CD4-positive, alpha-beta T cell (primary cell): ENCODE measurements at regions of chr21 and their contacts with region 1.

Region 1: GRCh38 chr21:34888569-34889319 is 160.4 kb downstream of the RUNX1 start:
- DNase-seq: peak; percentile 39 to 87 (median 60)
- ATAC-seq: peak; percentile 30
- H3K4me3 ChIP-seq: peak overlapping the region; percentile 80
- H3K4me3 Mint-ChIP-seq: peak overlapping the region; percentile 93
- H3K27ac ChIP-seq: peak overlapping the region; percentile 56 to 79
- H3K27ac Mint-ChIP-seq: peak overlapping the region; percentile 96
- H3K4me1 ChIP-seq: peaks cover 43% of the 10 kb centered on the region
- H3K4me1 Mint-ChIP-seq: peaks cover 66% of the 10 kb centered on the region
- H3K27me3 ChIP-seq: no peaks in the 10 kb centered on the region
- H3K27me3 Mint-ChIP-seq: no peaks in the 10 kb centered on the region
- CTCF ChIP-seq: peak; percentile 3

Region 2: DNA sequence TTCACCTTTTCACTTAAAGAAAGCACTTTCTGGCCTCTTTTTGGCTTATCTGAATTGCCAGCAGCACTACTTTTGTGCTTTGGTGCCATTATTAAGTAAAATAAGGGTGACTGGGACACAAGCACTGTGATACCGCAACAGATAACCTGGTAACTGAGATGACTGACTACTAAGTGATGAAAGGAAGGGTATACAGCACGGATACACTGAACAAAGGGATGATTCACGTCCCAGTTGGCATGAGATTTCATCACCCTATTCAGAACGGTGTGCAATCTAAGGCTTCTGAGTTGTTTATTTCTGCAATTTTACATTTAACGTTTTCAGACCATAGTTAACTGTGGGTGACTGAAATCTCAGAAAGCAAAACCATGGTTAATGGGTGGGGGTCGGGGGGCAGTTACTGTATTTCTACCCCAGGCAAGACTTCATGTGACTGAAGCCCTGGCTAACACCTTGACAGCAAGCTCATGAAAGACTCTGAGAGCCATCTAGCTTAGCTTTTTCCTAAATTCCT is 117.2 kb before region 1 on chr21:
- CTCF ChIA-PET with region 1: no interaction called
- POLR2A ChIA-PET with region 1: no interaction called
- intact Hi-C with region 1: no loop called
- DNase-seq: no peak
- ATAC-seq: no peak
- H3K4me3 ChIP-seq: no peak overlapping the region
- H3K4me3 Mint-ChIP-seq: no peak overlapping the region
- H3K27ac ChIP-seq: no peak overlapping the region
- H3K27ac Mint-ChIP-seq: no peak overlapping the region
- H3K4me1 ChIP-seq: no peaks in the 10 kb centered on the region
- H3K4me1 Mint-ChIP-seq: no peaks in the 10 kb centered on the region
- H3K27me3 ChIP-seq: no peaks in the 10 kb centered on the region
- H3K27me3 Mint-ChIP-seq: peaks cover 4% of the 10 kb centered on the region
- CTCF ChIP-seq: no peak

Region 3: DNA sequence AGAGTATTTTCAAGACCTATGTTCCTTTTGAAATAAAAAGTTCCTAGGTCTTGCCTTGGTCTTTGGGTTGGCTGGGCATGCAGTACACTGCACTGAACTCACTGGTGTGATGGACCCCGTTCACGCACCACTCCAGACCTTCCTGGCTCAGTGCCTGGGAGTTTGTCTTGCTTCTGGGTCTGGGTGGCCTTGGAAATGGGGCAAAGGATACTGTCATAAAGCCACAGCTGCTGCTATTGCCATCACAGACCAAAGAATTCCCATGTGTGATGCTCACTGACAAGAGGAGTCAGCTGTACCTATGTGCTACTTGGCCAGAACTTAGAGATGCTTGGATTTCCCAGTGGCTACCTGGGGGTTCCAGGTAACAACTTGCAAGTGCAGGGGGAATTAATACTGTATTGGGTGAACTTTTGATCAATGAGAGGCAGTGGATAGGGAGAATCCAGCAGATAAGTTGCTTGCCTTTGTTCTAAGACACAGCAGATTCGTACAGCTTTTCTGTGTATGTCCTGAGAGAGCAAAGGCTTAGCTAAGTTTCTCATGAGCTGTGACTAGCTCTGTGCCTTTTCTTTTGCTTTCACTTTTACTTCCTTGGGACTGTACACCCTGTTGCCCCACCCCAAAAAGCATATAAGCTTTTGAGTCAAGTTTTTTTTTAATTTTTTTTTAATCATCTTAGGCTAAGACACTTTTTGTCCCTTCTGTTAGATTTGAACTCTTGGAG is 45.0 kb after region 1 on chr21:
- CTCF ChIA-PET with region 1: interaction called, 12 read pairs
- POLR2A ChIA-PET with region 1: interaction called, 9 read pairs
- intact Hi-C with region 1: loop called in 1 of 2 experiments (anchors 1 kb)
- DNase-seq: peak in 7 of 14 experiments; percentile 10 to 89 (median 35)
- ATAC-seq: peak; percentile 86
- H3K4me3 ChIP-seq: peak overlapping the region; percentile 39
- H3K4me3 Mint-ChIP-seq: peak overlapping the region; percentile 86
- H3K27ac ChIP-seq: peak overlapping the region; percentile 75 to 84
- H3K27ac Mint-ChIP-seq: peak overlapping the region; percentile 99
- H3K4me1 ChIP-seq: peaks cover 47% of the 10 kb centered on the region
- H3K4me1 Mint-ChIP-seq: peaks cover 92% of the 10 kb centered on the region
- H3K27me3 ChIP-seq: no peaks in the 10 kb centered on the region
- H3K27me3 Mint-ChIP-seq: no peaks in the 10 kb centered on the region
- CTCF ChIP-seq: no peak

Region 4: GRCh38 chr21:34986561-34987500 is 98.1 kb after region 1 on chr21:
- CTCF ChIA-PET with region 1: interaction called, 20 read pairs
- POLR2A ChIA-PET with region 1: interaction called, 10 read pairs
- intact Hi-C with region 1: loop called in 1 of 2 experiments (anchors 5 kb)
- DNase-seq: peak; percentile 37 to 87 (median 64)
- ATAC-seq: peak; percentile 68
- H3K4me3 ChIP-seq: peak overlapping the region; percentile 17
- H3K4me3 Mint-ChIP-seq: peak overlapping the region; percentile 84
- H3K27ac ChIP-seq: peak overlapping the region; percentile 54 to 74
- H3K27ac Mint-ChIP-seq: no peak overlapping the region
- H3K4me1 ChIP-seq: peaks cover 96% of the 10 kb centered on the region
- H3K4me1 Mint-ChIP-seq: peaks cover 93% of the 10 kb centered on the region
- H3K27me3 ChIP-seq: no peaks in the 10 kb centered on the region
- H3K27me3 Mint-ChIP-seq: no peaks in the 10 kb centered on the region
- CTCF ChIP-seq: no peak

Region 5: GRCh38 chr21:35232545-35233176 is 343.9 kb after region 1 on chr21:
- CTCF ChIA-PET with region 1: no interaction called
- POLR2A ChIA-PET with region 1: no interaction called
- intact Hi-C with region 1: loop called in 1 of 2 experiments (anchors 10 kb)
- DNase-seq: no peak
- ATAC-seq: no peak
- H3K4me3 ChIP-seq: no peak overlapping the region
- H3K4me3 Mint-ChIP-seq: no peak overlapping the region
- H3K27ac ChIP-seq: no peak overlapping the region
- H3K27ac Mint-ChIP-seq: no peak overlapping the region
- H3K4me1 ChIP-seq: peaks cover 7% of the 10 kb centered on the region
- H3K4me1 Mint-ChIP-seq: peaks cover 28% of the 10 kb centered on the region
- H3K27me3 ChIP-seq: no peaks in the 10 kb centered on the region
- H3K27me3 Mint-ChIP-seq: no peaks in the 10 kb centered on the region
- CTCF ChIP-seq: no peak

Region 6: DNA sequence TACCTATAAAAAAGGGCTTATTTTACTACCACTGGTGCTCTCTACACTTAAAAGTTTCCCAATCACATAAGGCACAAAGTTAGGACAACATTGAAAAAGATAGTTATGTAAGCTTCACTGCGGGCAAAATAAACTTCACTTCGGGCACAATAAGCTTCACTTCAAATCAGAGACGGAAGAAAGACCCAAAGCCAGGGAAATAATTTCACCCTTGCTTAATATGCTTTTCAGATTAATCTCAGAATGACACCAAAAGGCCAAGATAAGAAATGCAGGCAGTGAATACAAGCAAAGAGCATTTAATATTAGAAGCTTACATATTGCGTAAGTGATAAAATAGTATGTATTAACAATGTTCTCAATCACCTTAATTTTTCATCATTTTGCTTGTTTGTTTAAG is 727.3 kb after region 1 on chr21:
- CTCF ChIA-PET with region 1: no interaction called
- POLR2A ChIA-PET with region 1: no interaction called
- intact Hi-C with region 1: loop called (anchors 10 kb)
- DNase-seq: peak in 3 of 14 experiments; percentile 14 to 32 (median 26)
- ATAC-seq: no peak
- H3K4me3 ChIP-seq: no peak overlapping the region
- H3K4me3 Mint-ChIP-seq: no peak overlapping the region
- H3K27ac ChIP-seq: no peak overlapping the region
- H3K27ac Mint-ChIP-seq: no peak overlapping the region
- H3K4me1 ChIP-seq: no peaks in the 10 kb centered on the region
- H3K4me1 Mint-ChIP-seq: peaks cover 4% of the 10 kb centered on the region
- H3K27me3 ChIP-seq: no peaks in the 10 kb centered on the region
- H3K27me3 Mint-ChIP-seq: no peaks in the 10 kb centered on the region
- CTCF ChIP-seq: peak; percentile 24